HepG2 (cell line): ENCODE measurements at regions of chr5 and their contacts with region 1.

Region 1: GRCh38 chr5:175895215-175896102 is 24.1 kb downstream of the CPLX2 start:
- DNase-seq: no peak
- ATAC-seq: no peak
- H3K4me3 ChIP-seq: no peak overlapping the region
- H3K27ac ChIP-seq: no peak overlapping the region
- H3K4me1 ChIP-seq: peaks cover 2% of the 10 kb centered on the region
- H3K27me3 ChIP-seq: no peaks in the 10 kb centered on the region
- CTCF ChIP-seq: no peak
- EP300 ChIP-seq: no peak
- POLR2A ChIP-seq: no peak
- RAD21 ChIP-seq: no peak

Region 2: DNA sequence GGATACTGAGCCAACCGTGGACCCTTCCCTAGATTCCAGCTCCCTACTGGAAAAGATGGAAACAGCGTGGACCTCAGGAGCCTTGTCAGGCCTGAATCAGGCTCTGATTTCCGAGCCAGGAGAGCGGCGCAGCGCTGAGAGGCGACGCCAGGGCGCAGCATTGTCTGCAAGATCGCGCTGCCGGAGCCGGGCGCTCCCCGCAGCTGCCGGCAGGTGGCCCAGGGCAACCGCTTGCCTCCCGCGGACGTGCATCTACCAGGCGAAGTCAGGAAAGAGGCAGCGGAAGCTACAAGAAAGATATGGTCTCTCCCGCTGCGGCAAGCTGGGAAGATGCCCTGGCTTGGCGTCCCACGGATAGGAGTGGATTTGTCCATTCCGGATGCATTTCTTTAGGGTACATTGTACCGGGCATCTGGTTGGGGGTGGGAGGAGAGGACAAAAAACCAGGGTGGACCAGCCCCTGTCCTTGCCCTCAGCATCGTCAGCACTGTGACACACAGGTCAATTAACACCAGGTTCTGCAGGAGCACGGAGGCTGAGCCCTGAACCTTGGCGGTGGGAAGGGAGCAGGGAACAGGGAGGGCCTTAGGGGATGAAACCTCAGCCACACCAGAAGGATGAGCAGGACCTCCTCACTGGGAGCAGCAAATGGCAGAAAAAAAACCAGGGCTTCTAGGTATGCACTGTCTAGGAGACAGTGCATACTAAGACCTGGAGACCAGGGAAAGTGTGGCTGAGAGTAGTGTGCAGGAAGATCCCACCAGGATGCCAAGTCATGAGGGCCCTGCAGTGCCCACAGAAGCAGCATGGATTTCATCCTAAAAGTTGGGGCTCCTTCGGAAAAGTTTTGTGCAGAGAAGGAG is 361.2 kb before region 1 on chr5:
- CTCF ChIA-PET with region 1: no interaction called
- POLR2A ChIA-PET with region 1: no interaction called
- in situ Hi-C with region 1: loop called (anchors 25 kb)
- intact Hi-C with region 1: no loop called
- DNase-seq: no peak
- ATAC-seq: peak; percentile 51
- H3K4me3 ChIP-seq: no peak overlapping the region
- H3K27ac ChIP-seq: no peak overlapping the region
- H3K4me1 ChIP-seq: no peaks in the 10 kb centered on the region
- H3K27me3 ChIP-seq: no peaks in the 10 kb centered on the region
- CTCF ChIP-seq: no peak
- EP300 ChIP-seq: no peak
- POLR2A ChIP-seq: no peak
- RAD21 ChIP-seq: peak; percentile 68